ENCODE measurements at regions of chr12 and their contacts with region 1.

Region 1: GRCh38 chr12:810671-811415 is 58.5 kb downstream of the WNK1 start:
- DNase-seq: no peak
- H3K4me3 ChIP-seq: no peak overlapping the region
- H3K27ac ChIP-seq: no peak overlapping the region
- H3K4me1 ChIP-seq: peaks cover 2 to 25% of the 10 kb centered on the region in 2 experiments
- H3K27me3 ChIP-seq: no peaks in the 10 kb centered on the region
- CTCF ChIP-seq: no peak
- EP300 ChIP-seq: no peak
- RAD21 ChIP-seq: no peak

Region 2: DNA sequence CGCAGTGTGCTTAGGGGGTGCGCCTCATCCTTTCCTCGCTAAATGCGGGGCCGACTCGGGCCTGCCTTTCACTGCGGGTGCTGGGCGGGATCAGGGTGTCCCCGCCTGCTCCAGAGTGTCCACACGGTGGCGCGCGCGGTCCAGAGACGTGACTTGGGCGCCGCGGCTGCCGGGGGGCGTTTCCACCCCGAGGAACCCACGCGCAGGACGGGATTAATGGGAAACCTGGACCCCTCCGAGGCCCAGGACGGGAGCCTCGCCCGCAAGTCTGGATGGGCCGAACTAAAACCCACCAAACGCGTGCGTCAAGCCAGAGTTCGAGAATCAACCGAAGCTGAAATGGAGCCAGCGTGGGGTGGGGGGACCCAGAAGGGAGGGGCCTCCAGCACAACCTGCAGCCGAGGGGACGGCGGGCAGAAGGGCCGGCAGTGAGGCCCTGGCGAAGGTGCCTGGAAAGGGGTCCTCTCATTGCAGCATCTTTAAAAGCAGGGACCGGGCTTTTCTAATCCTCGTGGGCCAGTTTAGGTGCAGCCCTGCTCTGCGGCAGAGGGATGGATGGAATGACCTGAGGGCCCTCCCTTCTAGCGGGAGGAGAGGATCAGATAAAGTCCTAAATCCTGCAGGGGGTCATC is 240.9 kb before region 1 on chr12:
- CTCF ChIA-PET with region 1: interaction called, 95 read pairs
- POLR2A ChIA-PET with region 1: no interaction called
- DNase-seq: peak; percentile 98
- H3K4me3 ChIP-seq: peak overlapping the region; percentile 62 to 88
- H3K27ac ChIP-seq: peak overlapping the region; percentile 75 to 76
- H3K4me1 ChIP-seq: peaks cover 0 to 24% of the 10 kb centered on the region in 2 experiments; a peak in 2 of 4 replicates
- H3K27me3 ChIP-seq: no peaks in the 10 kb centered on the region
- CTCF ChIP-seq: peak; percentile 92
- EP300 ChIP-seq: no peak
- RAD21 ChIP-seq: peak; percentile 88

Region 3: DNA sequence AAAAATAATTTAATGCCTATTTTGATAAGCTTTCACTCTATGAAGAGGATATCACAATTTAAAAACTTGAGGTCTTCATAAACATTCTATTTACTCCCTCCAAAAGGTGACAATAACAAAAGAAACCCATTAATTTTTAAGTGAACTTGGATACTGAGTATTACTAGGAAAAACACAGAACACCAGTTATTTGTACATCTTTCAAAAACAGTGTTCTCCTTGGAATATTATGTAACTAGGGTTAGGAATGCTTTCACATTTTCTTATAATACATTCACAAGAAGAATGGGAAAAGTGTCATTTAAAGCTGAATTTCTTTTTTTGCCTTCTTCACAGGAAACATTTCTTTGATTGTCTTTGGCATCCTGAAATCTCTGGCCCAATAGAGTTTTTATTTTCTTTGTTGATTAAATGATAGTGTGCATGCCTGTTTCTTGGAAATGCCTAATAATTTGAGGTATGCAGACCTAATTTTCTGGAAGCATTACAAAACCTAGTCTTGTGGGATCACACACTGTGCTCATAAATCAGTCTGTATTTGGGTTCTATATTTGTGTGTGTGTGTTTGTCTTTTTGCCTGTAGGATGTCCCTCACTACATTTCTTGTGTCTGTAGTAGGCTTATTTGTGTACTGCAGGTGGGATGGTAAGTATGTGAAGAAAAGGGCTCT is 18.0 kb after region 1 on chr12:
- CTCF ChIA-PET with region 1: interaction called, 15 read pairs
- POLR2A ChIA-PET with region 1: no interaction called
- DNase-seq: no peak
- H3K4me3 ChIP-seq: no peak overlapping the region
- H3K27ac ChIP-seq: peak overlapping the region; percentile 14 to 62; a peak in 3 of 4 replicates
- H3K4me1 ChIP-seq: peaks cover 4 to 6% of the 10 kb centered on the region in 2 experiments; a peak in 2 of 4 replicates
- H3K27me3 ChIP-seq: no peaks in the 10 kb centered on the region
- CTCF ChIP-seq: no peak
- EP300 ChIP-seq: no peak
- RAD21 ChIP-seq: no peak

Region 4: GRCh38 chr12:905261-906031 is 94.6 kb after region 1 on chr12:
- CTCF ChIA-PET with region 1: interaction called, 19 read pairs
- POLR2A ChIA-PET with region 1: no interaction called
- DNase-seq: no peak
- H3K4me3 ChIP-seq: no peak overlapping the region
- H3K27ac ChIP-seq: peak overlapping the region in 1 of 2 experiments; percentile 88; a peak in 2 of 4 replicates
- H3K4me1 ChIP-seq: peaks cover 0 to 21% of the 10 kb centered on the region in 2 experiments; a peak in 3 of 4 replicates
- H3K27me3 ChIP-seq: no peaks in the 10 kb centered on the region
- CTCF ChIP-seq: no peak
- EP300 ChIP-seq: no peak
- RAD21 ChIP-seq: no peak

Region 5: DNA sequence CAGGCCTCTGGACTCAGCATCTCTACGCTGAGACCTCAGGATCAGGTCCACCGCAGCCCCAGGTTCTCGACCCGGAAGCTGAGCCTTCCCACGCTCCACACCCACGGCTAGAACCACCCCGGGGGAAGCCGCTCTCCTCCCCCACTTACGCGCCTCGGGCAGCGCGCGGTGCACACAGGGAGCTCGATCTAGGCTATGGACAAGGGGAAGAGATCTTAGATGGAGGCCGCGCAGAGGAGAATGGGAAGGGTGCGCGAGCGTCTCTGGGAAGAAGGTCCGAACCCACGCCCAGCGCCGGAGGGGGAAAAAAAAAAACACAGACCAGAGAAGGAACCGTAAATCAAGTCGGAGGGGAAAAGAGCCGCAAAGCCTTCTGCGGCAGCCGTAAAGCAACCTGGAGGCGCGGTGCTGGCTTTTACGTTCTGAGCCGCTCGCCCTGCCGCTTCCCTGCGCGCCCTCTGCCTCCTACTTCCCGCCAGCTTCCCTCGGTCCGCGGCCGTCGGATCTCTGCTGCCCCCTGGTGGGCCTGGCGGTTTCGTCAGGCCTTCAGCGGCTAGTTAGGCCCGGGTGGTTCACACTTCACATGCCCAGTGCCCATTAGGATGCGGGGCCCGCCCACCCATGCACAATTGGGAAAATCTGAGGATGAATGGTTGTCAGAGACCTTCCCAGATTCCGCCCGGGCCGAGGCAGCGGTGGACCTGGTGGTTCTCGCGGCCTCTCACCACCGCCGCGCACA is 138.8 kb after region 1 on chr12 and contains the start of gene RAD52:
- CTCF ChIA-PET with region 1: interaction called, 45 read pairs
- POLR2A ChIA-PET with region 1: no interaction called
- DNase-seq: peak; percentile 91
- H3K4me3 ChIP-seq: peak within 1 kb of the TSS; percentile 69 to 94
- H3K27ac ChIP-seq: peak within 1 kb of the TSS; percentile 95
- H3K4me1 ChIP-seq: peaks cover 2 to 6% of the 10 kb centered on the region in 2 experiments; a peak in 3 of 4 replicates
- H3K27me3 ChIP-seq: no peaks in the 10 kb centered on the region
- CTCF ChIP-seq: peak; percentile 91
- EP300 ChIP-seq: peak; percentile 18 to 69; a peak in 1 of 4 replicates
- RAD21 ChIP-seq: peak; percentile 79
- polyA plus RNA-seq, gene RAD52: 11.2 and 12.1 TPM in 2 replicates